Activated CD8-positive, alpha-beta T cell treated with anti-CD3 and anti-CD28 coated beads for 36 hours (primary cell): ENCODE measurements at regions of chr3 and their contacts with region 1.

Region 1: DNA sequence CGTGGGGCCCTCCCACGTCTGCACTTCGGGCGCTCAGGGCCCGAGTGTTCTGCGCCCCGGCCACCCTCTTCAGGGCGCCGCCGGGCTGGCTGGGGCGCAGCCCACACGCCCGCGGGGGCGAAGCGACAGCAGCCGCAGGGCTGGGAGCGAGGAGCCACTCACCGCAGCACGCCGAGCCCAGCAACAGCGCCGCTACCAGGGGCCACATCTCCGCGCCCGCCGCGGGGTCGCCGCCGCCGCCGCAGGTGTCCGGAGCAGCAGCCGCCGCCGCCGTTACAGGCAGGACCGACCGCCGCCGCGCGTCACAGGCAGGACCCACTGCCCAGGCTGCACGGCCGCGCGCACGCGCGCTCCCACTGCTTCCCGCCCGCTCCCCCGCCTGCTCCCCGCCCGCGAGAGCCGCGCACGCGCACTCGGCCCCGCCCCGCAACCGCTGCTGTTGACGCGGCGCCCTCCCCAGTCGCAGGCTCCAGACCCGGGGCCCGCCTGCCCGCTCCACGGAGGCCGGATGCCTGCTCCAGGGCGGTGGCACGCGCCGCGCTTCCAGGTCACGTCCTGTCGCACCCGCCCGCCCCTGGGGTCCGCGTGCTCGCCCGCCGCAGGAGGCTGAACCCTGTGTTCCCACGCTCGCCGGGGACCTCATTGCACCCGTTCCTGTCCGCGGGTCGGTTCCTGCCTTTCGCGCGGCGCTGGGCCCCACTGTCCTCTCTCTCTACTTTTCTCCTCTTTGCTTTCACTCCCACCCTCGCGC is at the start of gene CD47:
- DNase-seq: peak; percentile 93
- ATAC-seq: peak; percentile 68
- H3K4me3 Mint-ChIP-seq: no peak within 1 kb of the TSS
- H3K27ac Mint-ChIP-seq: peak within 1 kb of the TSS; percentile 99
- H3K4me1 Mint-ChIP-seq: peaks cover 33% of the 10 kb centered on the region
- H3K27me3 Mint-ChIP-seq: no peaks in the 10 kb centered on the region
- CTCF ChIP-seq: no peak
- total RNA-seq, gene CD47: 88.7 to 91.6 TPM

Region 2: DNA sequence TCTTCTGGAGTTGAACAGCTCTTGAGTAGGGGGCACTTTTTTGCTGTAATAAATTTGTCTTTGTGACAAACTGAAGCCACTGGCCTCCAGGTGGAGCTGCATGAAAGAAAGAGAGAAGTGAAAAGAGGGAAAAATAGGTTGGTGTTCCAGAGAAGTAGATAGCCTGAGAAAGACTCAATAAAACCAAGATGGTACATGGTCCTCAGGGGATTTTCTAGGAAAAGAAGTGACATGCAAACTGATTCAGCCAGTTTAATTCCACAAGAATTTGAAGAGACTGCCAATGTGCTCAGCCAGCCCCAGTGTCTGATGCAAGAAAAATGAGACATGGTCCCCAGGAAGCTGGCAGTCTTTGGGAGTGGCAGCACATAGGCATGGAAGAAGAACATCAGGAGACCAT is 152.7 kb before region 1 on chr3:
- CTCF ChIA-PET with region 1: no interaction called
- POLR2A ChIA-PET with region 1: no interaction called
- intact Hi-C with region 1: loop called (anchors 5 kb)
- DNase-seq: peak; percentile 18
- ATAC-seq: no peak
- H3K4me3 Mint-ChIP-seq: no peak overlapping the region
- H3K27ac Mint-ChIP-seq: no peak overlapping the region
- H3K4me1 Mint-ChIP-seq: peaks cover 22% of the 10 kb centered on the region
- H3K27me3 Mint-ChIP-seq: peaks cover 2% of the 10 kb centered on the region
- CTCF ChIP-seq: peak; percentile 26

Region 3: GRCh38 chr3:108079877-108080659 is 10.8 kb before region 1 on chr3:
- CTCF ChIA-PET with region 1: interaction called, 5 read pairs
- POLR2A ChIA-PET with region 1: interaction called, 14 read pairs
- intact Hi-C with region 1: no loop called
- DNase-seq: no peak
- ATAC-seq: peak; percentile 72
- H3K4me3 Mint-ChIP-seq: peak overlapping the region; percentile 34
- H3K27ac Mint-ChIP-seq: peak overlapping the region; percentile 67
- H3K4me1 Mint-ChIP-seq: peaks cover 71% of the 10 kb centered on the region
- H3K27me3 Mint-ChIP-seq: no peaks in the 10 kb centered on the region
- CTCF ChIP-seq: no peak

Region 4: DNA sequence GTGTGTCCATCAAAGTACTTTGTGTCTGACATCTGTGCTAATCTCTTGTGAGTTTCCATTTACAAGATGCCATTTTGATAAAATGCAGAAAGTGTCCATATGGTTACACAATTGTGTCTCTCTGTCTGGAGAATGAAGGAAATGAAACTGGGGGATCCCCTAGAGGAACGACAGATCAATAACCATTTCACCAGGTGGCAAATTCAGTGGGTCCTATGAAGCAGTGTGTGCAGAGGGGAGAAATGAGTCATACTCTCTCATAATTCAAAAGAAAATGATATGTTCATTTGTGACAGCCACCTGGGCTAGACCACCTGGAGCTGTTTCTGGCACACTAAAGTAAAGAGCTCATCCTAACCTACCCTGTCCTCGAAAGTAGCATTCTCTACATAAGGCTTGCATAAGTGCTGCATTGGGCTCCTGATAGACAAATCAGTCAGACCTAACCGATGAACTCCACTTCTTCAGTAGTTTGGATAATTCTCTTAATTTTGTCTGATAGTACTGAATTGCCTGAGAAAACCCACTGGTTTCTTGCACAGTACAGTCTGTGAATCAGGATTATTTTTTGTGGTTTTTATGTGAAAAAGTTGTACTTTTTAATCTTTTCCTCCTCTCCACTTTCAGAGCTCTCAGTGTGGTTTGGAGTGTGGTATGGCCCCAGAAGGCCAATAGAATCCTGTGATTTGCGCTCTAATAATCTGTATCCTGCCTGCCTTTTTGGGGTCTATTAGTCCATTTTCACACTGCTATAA is 10.2 kb after region 1 on chr3:
- CTCF ChIA-PET with region 1: interaction called, 5 read pairs
- POLR2A ChIA-PET with region 1: interaction called, 42 read pairs
- intact Hi-C with region 1: no loop called
- DNase-seq: peak; percentile 73
- ATAC-seq: peak; percentile 83
- H3K4me3 Mint-ChIP-seq: peak overlapping the region; percentile 28
- H3K27ac Mint-ChIP-seq: peak overlapping the region; percentile 85
- H3K4me1 Mint-ChIP-seq: peaks cover 58% of the 10 kb centered on the region
- H3K27me3 Mint-ChIP-seq: no peaks in the 10 kb centered on the region
- CTCF ChIP-seq: no peak

Region 5: GRCh38 chr3:108124337-108125152 is 33.7 kb after region 1 on chr3:
- CTCF ChIA-PET with region 1: interaction called, 12 read pairs
- POLR2A ChIA-PET with region 1: interaction called, 161 read pairs
- intact Hi-C with region 1: loop called (anchors 2 kb)
- DNase-seq: peak; percentile 88
- ATAC-seq: peak; percentile 71
- H3K4me3 Mint-ChIP-seq: peak overlapping the region; percentile 92
- H3K27ac Mint-ChIP-seq: peak overlapping the region; percentile 100
- H3K4me1 Mint-ChIP-seq: peaks cover 60% of the 10 kb centered on the region
- H3K27me3 Mint-ChIP-seq: no peaks in the 10 kb centered on the region
- CTCF ChIP-seq: no peak

Region 6: GRCh38 chr3:108130701-108131474 is 40.0 kb after region 1 on chr3:
- CTCF ChIA-PET with region 1: interaction called, 12 read pairs
- POLR2A ChIA-PET with region 1: interaction called, 161 read pairs
- intact Hi-C with region 1: no loop called
- DNase-seq: no peak
- ATAC-seq: peak; percentile 34
- H3K4me3 Mint-ChIP-seq: peak overlapping the region; percentile 45
- H3K27ac Mint-ChIP-seq: peak overlapping the region; percentile 87
- H3K4me1 Mint-ChIP-seq: peaks cover 87% of the 10 kb centered on the region
- H3K27me3 Mint-ChIP-seq: no peaks in the 10 kb centered on the region
- CTCF ChIP-seq: no peak

Region 7: DNA sequence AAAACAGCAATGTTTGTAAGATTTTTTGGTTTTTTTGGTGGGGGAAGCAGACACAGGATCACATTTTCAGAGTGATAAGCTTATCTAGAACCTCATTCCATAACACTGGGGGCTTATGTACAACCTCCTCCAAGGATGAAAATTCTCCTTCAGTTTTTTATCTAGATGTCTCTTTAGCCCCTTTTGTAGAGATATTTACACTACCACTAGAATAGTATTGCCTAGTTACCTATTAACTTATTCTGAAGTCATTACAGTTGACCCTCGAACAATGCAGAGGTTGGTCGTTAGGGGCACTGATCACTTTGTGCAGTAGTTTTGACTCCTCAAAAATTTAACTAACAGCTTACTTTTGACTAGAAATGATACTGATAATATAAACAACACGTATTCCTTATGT is 98.6 kb after region 1 on chr3:
- CTCF ChIA-PET with region 1: no interaction called
- POLR2A ChIA-PET with region 1: no interaction called
- intact Hi-C with region 1: no loop called
- DNase-seq: no peak
- ATAC-seq: no peak
- H3K4me3 Mint-ChIP-seq: no peak overlapping the region
- H3K27ac Mint-ChIP-seq: no peak overlapping the region
- H3K4me1 Mint-ChIP-seq: no peaks in the 10 kb centered on the region
- H3K27me3 Mint-ChIP-seq: no peaks in the 10 kb centered on the region
- CTCF ChIP-seq: no peak